CD4-positive, alpha-beta memory T cell (primary cell): ENCODE measurements at regions of chr12 and their contacts with region 1.

Region 1: DNA sequence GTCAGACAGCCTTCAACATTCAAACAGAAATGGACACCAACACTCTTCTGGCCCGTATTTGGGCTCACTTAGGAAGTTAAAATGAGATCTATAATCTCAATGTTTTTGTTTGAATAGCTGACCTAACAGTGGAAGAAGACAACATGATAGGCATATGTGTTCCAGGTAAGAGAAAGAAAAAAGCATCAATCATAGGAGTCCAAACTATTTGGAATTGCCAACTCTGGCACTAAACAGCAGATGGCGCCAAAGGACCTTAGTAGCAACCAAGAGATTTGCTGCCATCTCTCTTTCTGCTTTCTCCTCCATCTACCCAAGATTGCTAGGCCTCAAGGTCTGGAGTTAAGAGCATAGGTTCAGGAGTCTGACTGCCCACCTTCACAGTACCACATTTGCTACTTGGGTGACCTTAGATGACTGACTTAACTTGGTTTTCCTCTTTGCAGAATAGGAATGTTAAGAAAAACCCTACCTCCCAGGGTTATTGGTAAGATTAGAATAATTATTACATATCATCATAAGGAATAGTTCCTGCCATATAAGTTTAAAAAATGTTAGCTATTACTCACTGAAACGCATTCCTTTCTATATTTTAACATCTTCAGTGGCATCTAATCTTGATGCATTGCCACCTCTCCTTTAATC is 30.2 kb downstream of the PEX5 start:
- DNase-seq: peak; percentile 67 to 69 (median 68)
- H3K4me3 ChIP-seq: no peak overlapping the region
- H3K4me3 Mint-ChIP-seq: no peak overlapping the region
- H3K27ac ChIP-seq: no peak overlapping the region
- H3K27ac Mint-ChIP-seq: no peak overlapping the region
- H3K4me1 ChIP-seq: no peaks in the 10 kb centered on the region
- H3K4me1 Mint-ChIP-seq: no peaks in the 10 kb centered on the region
- H3K27me3 ChIP-seq: no peaks in the 10 kb centered on the region
- H3K27me3 Mint-ChIP-seq: no peaks in the 10 kb centered on the region

Region 2: DNA sequence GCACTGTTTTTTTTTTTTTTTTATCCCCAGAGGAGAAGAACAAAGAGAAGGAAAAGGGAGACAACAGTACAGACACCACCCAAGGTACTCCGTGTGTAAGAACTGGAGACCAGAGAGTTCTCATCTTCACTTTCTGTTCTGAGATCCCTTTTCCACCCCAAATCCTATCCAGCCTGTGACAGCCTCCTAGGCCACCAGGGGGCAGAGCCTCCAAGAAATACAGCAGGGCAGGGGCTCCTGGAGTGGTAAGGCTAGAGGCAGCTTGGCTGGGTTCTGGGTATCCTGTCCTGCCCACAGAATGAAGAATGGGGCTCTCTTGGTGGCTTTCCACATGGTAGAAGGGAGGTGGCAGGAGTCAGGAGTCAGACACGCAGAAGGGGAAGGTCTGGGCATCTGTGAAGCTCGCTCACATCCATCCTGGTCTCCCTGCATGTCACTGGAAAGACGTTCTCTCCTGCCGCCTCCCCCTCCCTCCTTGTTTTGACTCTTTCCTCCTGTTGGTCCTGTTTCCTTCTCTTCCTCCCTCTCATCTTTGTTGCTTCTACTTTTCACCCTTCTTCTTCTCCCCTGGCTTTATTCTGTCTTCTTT is 77.6 kb before region 1 on chr12:
- CTCF ChIA-PET with region 1: no interaction called
- POLR2A ChIA-PET with region 1: no interaction called
- intact Hi-C with region 1: loop called (anchors 2 kb)
- DNase-seq: peak; percentile 40 to 53 (median 44)
- H3K4me3 ChIP-seq: no peak overlapping the region
- H3K4me3 Mint-ChIP-seq: no peak overlapping the region
- H3K27ac ChIP-seq: no peak overlapping the region
- H3K27ac Mint-ChIP-seq: peak overlapping the region in 4 of 7 donors; percentile 16 to 80 (median 43)
- H3K4me1 ChIP-seq: no peaks in the 10 kb centered on the region
- H3K4me1 Mint-ChIP-seq: peaks cover 0 to 12% (median 4%) of the 10 kb centered on the region in 4 donors
- H3K27me3 ChIP-seq: no peaks in the 10 kb centered on the region
- H3K27me3 Mint-ChIP-seq: no peaks in the 10 kb centered on the region

Region 3: GRCh38 chr12:7155481-7156034 is 64.2 kb before region 1 on chr12:
- CTCF ChIA-PET with region 1: no interaction called
- POLR2A ChIA-PET with region 1: no interaction called
- intact Hi-C with region 1: no loop called
- DNase-seq: no peak
- H3K4me3 ChIP-seq: no peak overlapping the region
- H3K4me3 Mint-ChIP-seq: no peak overlapping the region
- H3K27ac ChIP-seq: no peak overlapping the region
- H3K27ac Mint-ChIP-seq: peak overlapping the region in 2 of 7 donors; percentile 5 to 23
- H3K4me1 ChIP-seq: no peaks in the 10 kb centered on the region
- H3K4me1 Mint-ChIP-seq: peaks cover 0 to 3% (median under 1%) of the 10 kb centered on the region in 4 donors
- H3K27me3 ChIP-seq: no peaks in the 10 kb centered on the region
- H3K27me3 Mint-ChIP-seq: no peaks in the 10 kb centered on the region

Region 4: DNA sequence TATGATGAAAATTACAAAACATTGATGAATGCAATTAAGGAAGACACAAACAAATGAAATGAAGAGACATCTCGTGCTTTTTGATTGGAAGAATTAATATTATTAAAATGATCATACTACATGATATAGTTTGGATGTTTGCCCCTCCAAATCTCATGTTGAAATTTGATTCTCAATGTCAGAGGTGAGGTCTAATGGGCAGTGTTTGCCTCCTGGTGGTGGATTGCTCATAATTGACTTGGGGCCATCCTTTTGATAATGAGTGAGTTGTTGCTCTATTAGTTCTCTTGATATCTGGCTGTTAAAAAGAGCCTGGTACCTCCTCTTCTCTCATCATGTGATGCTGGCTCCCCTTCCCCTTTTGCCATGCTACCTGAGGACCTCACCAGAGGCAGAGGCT is 167.6 kb after region 1 on chr12:
- CTCF ChIA-PET with region 1: no interaction called
- POLR2A ChIA-PET with region 1: no interaction called
- intact Hi-C with region 1: loop called (anchors 1 kb)
- DNase-seq: peak in 1 of 5 donors; percentile 5
- H3K4me3 ChIP-seq: no peak overlapping the region
- H3K4me3 Mint-ChIP-seq: no peak overlapping the region
- H3K27ac ChIP-seq: no peak overlapping the region
- H3K27ac Mint-ChIP-seq: no peak overlapping the region
- H3K4me1 ChIP-seq: no peaks in the 10 kb centered on the region
- H3K4me1 Mint-ChIP-seq: no peaks in the 10 kb centered on the region
- H3K27me3 ChIP-seq: no peaks in the 10 kb centered on the region
- H3K27me3 Mint-ChIP-seq: peaks cover 0 to 8% of the 10 kb centered on the region in 2 donors

Region 5: GRCh38 chr12:7583571-7583970 is 363.9 kb after region 1 on chr12:
- CTCF ChIA-PET with region 1: no interaction called
- POLR2A ChIA-PET with region 1: no interaction called
- intact Hi-C with region 1: loop called (anchors 1 kb)
- DNase-seq: no peak
- H3K4me3 ChIP-seq: no peak overlapping the region
- H3K4me3 Mint-ChIP-seq: no peak overlapping the region
- H3K27ac ChIP-seq: no peak overlapping the region
- H3K27ac Mint-ChIP-seq: no peak overlapping the region
- H3K4me1 ChIP-seq: no peaks in the 10 kb centered on the region
- H3K4me1 Mint-ChIP-seq: peaks cover 0 to 2% (median under 1%) of the 10 kb centered on the region in 4 donors
- H3K27me3 ChIP-seq: no peaks in the 10 kb centered on the region
- H3K27me3 Mint-ChIP-seq: peaks cover 18 to 23% of the 10 kb centered on the region in 2 donors

Region 6: DNA sequence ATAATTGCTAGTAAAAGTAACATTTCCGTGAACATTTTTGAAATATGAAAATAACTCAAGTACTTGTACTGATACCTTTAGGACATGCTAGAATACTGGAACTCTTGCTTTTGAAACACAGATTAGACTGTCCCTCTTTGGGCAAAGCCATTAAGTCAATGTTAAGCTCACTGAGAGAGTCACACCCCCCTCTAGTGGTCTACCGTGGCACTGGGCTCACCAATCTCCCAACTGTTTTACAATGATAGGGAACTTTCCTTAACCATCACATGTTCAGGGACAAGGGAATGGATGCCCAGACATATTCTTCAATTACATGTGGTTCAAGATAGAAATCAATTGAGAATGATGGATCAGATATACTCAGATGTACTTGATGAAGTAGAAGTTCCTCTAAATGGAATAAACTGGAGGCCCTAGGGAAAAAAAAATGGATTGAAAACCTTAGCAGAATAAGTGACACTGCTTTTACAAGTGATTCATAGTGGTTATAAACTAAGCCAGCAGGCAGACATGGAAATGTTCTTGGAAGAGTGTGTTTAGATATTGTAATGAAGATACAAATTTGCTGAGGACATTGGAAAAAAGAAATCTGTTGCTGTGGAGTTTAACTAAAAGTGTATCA is 587.3 kb after region 1 on chr12:
- CTCF ChIA-PET with region 1: no interaction called
- POLR2A ChIA-PET with region 1: no interaction called
- intact Hi-C with region 1: loop called (anchors 1 kb)
- DNase-seq: peak; percentile 27 to 43 (median 39)
- H3K4me3 ChIP-seq: no peak overlapping the region
- H3K4me3 Mint-ChIP-seq: no peak overlapping the region
- H3K27ac ChIP-seq: no peak overlapping the region
- H3K27ac Mint-ChIP-seq: no peak overlapping the region
- H3K4me1 ChIP-seq: no peaks in the 10 kb centered on the region
- H3K4me1 Mint-ChIP-seq: no peaks in the 10 kb centered on the region
- H3K27me3 ChIP-seq: no peaks in the 10 kb centered on the region
- H3K27me3 Mint-ChIP-seq: peaks cover 1 to 3% of the 10 kb centered on the region in 2 donors